Activated B cell treated with CpG ODN at 0.5 μM for 24 hours (primary cell): ENCODE measurements at regions of chr13 and their contacts with region 1.

Region 1: GRCh38 chr13:77460195-77460594 is 75.3 kb upstream of the SCEL start:
- DNase-seq: no peak
- ATAC-seq: peak; percentile 91
- H3K4me3 Mint-ChIP-seq: no peak overlapping the region
- H3K27ac Mint-ChIP-seq: no peak overlapping the region
- H3K4me1 Mint-ChIP-seq: peaks cover 30% of the 10 kb centered on the region
- H3K27me3 Mint-ChIP-seq: no peaks in the 10 kb centered on the region
- CTCF ChIP-seq: no peak

Region 2: GRCh38 chr13:77448679-77449078 is 11.5 kb before region 1 on chr13:
- CTCF ChIA-PET with region 1: no interaction called
- POLR2A ChIA-PET with region 1: no interaction called
- intact Hi-C with region 1: loop called (anchors 1 kb)
- DNase-seq: no peak
- ATAC-seq: no peak
- H3K4me3 Mint-ChIP-seq: no peak overlapping the region
- H3K27ac Mint-ChIP-seq: no peak overlapping the region
- H3K4me1 Mint-ChIP-seq: peaks cover 5% of the 10 kb centered on the region
- H3K27me3 Mint-ChIP-seq: no peaks in the 10 kb centered on the region
- CTCF ChIP-seq: no peak